Gastrocnemius medialis (tissue), 4 donors: ENCODE measurements at regions of chr14 and their contacts with region 1.

Region 1: GRCh38 chr14:73568381-73568781 is 632 bp upstream of the ACOT2 start:
- DNase-seq: no peak
- ATAC-seq: peak in 1 of 2 donors; percentile 22
- H3K4me3 ChIP-seq: peak overlapping the region; percentile 56 to 81 (median 72)
- H3K27ac ChIP-seq: peak overlapping the region; percentile 88 to 98 (median 94)
- H3K4me1 ChIP-seq: peaks cover 9 to 28% of the 10 kb centered on the region in 2 donors
- H3K27me3 ChIP-seq: no peaks in the 10 kb centered on the region
- CTCF ChIP-seq: no peak
- POLR2A ChIP-seq: no peak

Region 2: DNA sequence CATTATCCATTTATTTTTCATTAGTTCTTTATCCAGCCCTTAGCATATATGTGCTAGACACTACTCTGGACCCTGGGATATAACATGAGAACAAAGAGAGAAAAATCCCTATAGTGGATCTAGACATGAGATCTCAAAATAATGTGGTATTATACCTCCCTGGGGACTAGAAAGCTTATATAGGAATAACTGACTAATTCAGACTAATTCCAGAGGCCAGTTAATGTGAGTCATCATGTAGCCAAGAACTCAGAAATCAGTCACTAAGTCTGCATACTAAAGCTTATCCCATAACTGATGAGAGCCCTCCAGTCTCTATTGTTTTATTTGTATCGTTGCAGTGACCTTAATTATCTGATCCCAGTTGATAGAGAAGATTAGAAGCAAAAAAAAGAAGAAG is 1903.2 kb before region 1 on chr14:
- in situ Hi-C with region 1: no loop called
- intact Hi-C with region 1: no loop called
- DNase-seq: no peak
- ATAC-seq: no peak
- H3K4me3 ChIP-seq: no peak overlapping the region
- H3K27ac ChIP-seq: no peak overlapping the region
- H3K4me1 ChIP-seq: no peaks in the 10 kb centered on the region
- H3K27me3 ChIP-seq: no peaks in the 10 kb centered on the region
- CTCF ChIP-seq: no peak
- POLR2A ChIP-seq: no peak

Region 3: DNA sequence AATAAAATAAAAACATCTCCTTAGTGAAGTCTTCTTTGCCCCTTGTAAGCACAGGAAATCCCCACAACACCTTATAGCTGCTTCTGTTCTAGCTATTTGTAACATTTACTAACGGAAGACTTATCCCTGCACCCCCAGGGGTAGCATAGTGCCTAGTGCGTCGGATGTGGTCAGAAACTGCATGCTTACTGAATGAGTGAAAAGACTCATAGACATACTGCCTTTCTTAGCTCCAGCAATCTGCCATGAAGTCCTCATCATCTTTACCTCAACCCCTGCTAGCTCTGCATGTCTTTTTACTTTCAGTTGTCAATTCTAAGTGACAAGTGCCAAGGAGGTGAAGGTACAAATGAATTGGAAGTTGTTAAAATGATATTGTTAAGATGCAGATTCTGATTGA is 64.7 kb before region 1 on chr14:
- in situ Hi-C with region 1: loop called in 2 of 4 experiments (anchors 10 kb)
- intact Hi-C with region 1: loop called (anchors 2 kb)
- DNase-seq: no peak
- ATAC-seq: no peak
- H3K4me3 ChIP-seq: no peak overlapping the region
- H3K27ac ChIP-seq: no peak overlapping the region
- H3K4me1 ChIP-seq: no peaks in the 10 kb centered on the region
- H3K27me3 ChIP-seq: no peaks in the 10 kb centered on the region
- CTCF ChIP-seq: no peak
- POLR2A ChIP-seq: no peak

Region 4: DNA sequence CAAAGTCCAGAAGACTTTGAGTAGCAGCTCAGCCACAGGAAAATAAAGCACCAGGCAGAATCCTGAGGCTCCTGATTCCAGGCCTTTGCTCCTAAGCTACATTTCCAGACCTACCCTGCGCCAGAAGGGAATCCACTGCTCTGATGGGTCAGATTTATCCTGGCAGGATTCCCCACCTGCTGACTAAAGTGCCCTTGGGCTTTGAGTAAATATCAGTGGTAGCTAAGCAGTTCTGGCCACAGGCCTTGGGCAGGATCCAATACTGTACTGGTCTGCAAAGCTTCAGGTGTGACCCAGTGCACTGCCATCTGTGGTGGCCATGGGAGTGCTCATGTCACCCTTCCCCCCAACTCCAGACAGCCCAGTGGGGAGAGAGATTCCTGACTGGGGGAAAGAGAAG is 41.8 kb before region 1 on chr14:
- in situ Hi-C with region 1: loop called in 2 of 4 experiments (anchors 5 to 10 kb)
- intact Hi-C with region 1: loop called (anchors 5 kb)
- DNase-seq: no peak
- ATAC-seq: peak; percentile 36 to 60
- H3K4me3 ChIP-seq: no peak overlapping the region
- H3K27ac ChIP-seq: peak overlapping the region; percentile 14 to 33 (median 22)
- H3K4me1 ChIP-seq: peaks cover 11 to 16% of the 10 kb centered on the region in 2 donors
- H3K27me3 ChIP-seq: no peaks in the 10 kb centered on the region
- CTCF ChIP-seq: no peak
- POLR2A ChIP-seq: no peak

Region 5: GRCh38 chr14:73633116-73634010 is 65.0 kb after region 1 on chr14:
- in situ Hi-C with region 1: no loop called
- intact Hi-C with region 1: loop called (anchors 5 kb)
- DNase-seq: peak; percentile 24 to 65
- ATAC-seq: peak; percentile 81 to 82
- H3K4me3 ChIP-seq: peak overlapping the region; percentile 69 to 80 (median 71)
- H3K27ac ChIP-seq: peak overlapping the region; percentile 80 to 83 (median 82)
- H3K4me1 ChIP-seq: peaks cover 5 to 11% of the 10 kb centered on the region in 2 donors
- H3K27me3 ChIP-seq: no peaks in the 10 kb centered on the region
- CTCF ChIP-seq: peak; percentile 86 to 94 (median 88)
- POLR2A ChIP-seq: no peak

Region 6: DNA sequence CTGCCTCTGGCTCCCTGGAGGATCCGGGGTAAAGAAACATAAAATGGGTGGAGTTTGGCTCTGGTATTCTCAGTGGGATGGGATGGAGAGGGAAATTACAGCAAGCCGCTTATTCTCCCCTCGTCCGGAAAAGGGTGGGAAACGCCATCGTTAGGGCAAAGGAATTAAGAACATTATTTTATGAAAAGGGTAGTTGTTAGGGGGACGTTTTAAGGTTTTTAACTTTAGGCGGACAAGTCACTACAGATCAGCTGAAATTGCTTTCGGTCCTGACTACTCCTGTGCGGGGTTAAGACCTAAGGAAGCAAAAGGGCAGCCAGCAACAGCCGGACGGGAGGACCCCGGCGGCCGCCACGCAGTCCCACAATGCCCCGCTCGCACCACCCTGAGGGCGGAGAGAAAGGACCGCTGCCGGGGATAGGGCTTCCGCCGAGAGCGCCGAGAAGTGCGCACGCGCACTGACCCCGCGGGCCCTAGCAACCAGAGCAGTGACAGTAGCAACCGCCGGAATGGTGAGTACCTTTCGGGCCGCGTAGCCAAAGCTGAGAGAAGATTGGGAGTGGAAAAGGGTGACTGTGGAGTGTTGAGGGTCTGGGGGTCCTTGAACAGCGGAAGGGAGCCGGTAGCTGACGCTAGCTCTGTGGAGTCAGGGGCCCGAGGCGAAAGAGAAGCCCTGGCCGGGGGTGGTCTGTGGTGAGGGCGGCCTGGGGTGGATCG is 76.3 kb after region 1 on chr14 and contains the start of gene DNAL1:
- in situ Hi-C with region 1: no loop called
- intact Hi-C with region 1: loop called (anchors 2 kb)
- DNase-seq: peak; percentile 79 to 90
- ATAC-seq: peak; percentile 97 to 99
- H3K4me3 ChIP-seq: peak within 1 kb of the TSS; percentile 85 to 92 (median 92)
- H3K27ac ChIP-seq: peak within 1 kb of the TSS; percentile 84 to 94 (median 89)
- H3K4me1 ChIP-seq: peaks cover 11 to 17% of the 10 kb centered on the region in 2 donors
- H3K27me3 ChIP-seq: no peaks in the 10 kb centered on the region
- CTCF ChIP-seq: peak in 1 of 5 experiments; percentile 14
- POLR2A ChIP-seq: peak; percentile 37 to 49
- total RNA-seq, gene DNAL1: 6.4 to 8.2 (median 7.7) TPM